Activated CD8-positive, alpha-beta T cell treated with anti-CD3 and anti-CD28 coated beads for 36 hours (primary cell): ENCODE measurements at regions of chr17 and their contacts with region 1.

Region 1: GRCh38 chr17:48878918-48879898 is 13.4 kb upstream of the ATP5MC1 start:
- DNase-seq: peak; percentile 69
- ATAC-seq: peak; percentile 98
- H3K4me3 Mint-ChIP-seq: no peak overlapping the region
- H3K27ac Mint-ChIP-seq: no peak overlapping the region
- H3K4me1 Mint-ChIP-seq: no peaks in the 10 kb centered on the region
- H3K27me3 Mint-ChIP-seq: peaks cover 3% of the 10 kb centered on the region
- CTCF ChIP-seq: peak; percentile 94

Region 2: GRCh38 chr17:48724251-48725003 is 154.8 kb before region 1 on chr17:
- CTCF ChIA-PET with region 1: interaction called, 58 read pairs
- POLR2A ChIA-PET with region 1: no interaction called
- intact Hi-C with region 1: no loop called
- DNase-seq: peak; percentile 91
- ATAC-seq: peak; percentile 70
- H3K4me3 Mint-ChIP-seq: peak overlapping the region; percentile 40
- H3K27ac Mint-ChIP-seq: no peak overlapping the region
- H3K4me1 Mint-ChIP-seq: peaks cover 29% of the 10 kb centered on the region
- H3K27me3 Mint-ChIP-seq: peaks cover 88% of the 10 kb centered on the region
- CTCF ChIP-seq: peak; percentile 80

Region 3: GRCh38 chr17:48816774-48817590 is 62.2 kb before region 1 on chr17 and contains the start of gene TTLL6:
- CTCF ChIA-PET with region 1: interaction called, 614 read pairs
- POLR2A ChIA-PET with region 1: interaction called, 3 read pairs
- intact Hi-C with region 1: loop called (anchors 2 kb)
- DNase-seq: peak; percentile 76
- ATAC-seq: peak; percentile 94
- H3K4me3 Mint-ChIP-seq: peak within 1 kb of the TSS; percentile 63
- H3K27ac Mint-ChIP-seq: no peak within 1 kb of the TSS
- H3K4me1 Mint-ChIP-seq: peaks cover 18% of the 10 kb centered on the region
- H3K27me3 Mint-ChIP-seq: peaks cover 46% of the 10 kb centered on the region
- CTCF ChIP-seq: no peak
- total RNA-seq, gene TTLL6: not detected

Region 4: GRCh38 chr17:48843172-48843900 is 35.9 kb before region 1 on chr17:
- CTCF ChIA-PET with region 1: interaction called, 11 read pairs
- POLR2A ChIA-PET with region 1: interaction called, 3 read pairs
- intact Hi-C with region 1: no loop called
- DNase-seq: no peak
- ATAC-seq: no peak
- H3K4me3 Mint-ChIP-seq: no peak overlapping the region
- H3K27ac Mint-ChIP-seq: no peak overlapping the region
- H3K4me1 Mint-ChIP-seq: peaks cover 41% of the 10 kb centered on the region
- H3K27me3 Mint-ChIP-seq: no peaks in the 10 kb centered on the region
- CTCF ChIP-seq: no peak

Region 5: GRCh38 chr17:48892940-48893645 is 13.9 kb after region 1 on chr17:
- CTCF ChIA-PET with region 1: interaction called, 23 read pairs
- POLR2A ChIA-PET with region 1: no interaction called
- intact Hi-C with region 1: no loop called
- DNase-seq: peak; percentile 38
- ATAC-seq: no peak
- H3K4me3 Mint-ChIP-seq: peak overlapping the region; percentile 94
- H3K27ac Mint-ChIP-seq: peak overlapping the region; percentile 98
- H3K4me1 Mint-ChIP-seq: peaks cover 26% of the 10 kb centered on the region
- H3K27me3 Mint-ChIP-seq: no peaks in the 10 kb centered on the region
- CTCF ChIP-seq: no peak